ENCODE measurements at regions of chr1 and their contacts with region 1.

Region 1: DNA sequence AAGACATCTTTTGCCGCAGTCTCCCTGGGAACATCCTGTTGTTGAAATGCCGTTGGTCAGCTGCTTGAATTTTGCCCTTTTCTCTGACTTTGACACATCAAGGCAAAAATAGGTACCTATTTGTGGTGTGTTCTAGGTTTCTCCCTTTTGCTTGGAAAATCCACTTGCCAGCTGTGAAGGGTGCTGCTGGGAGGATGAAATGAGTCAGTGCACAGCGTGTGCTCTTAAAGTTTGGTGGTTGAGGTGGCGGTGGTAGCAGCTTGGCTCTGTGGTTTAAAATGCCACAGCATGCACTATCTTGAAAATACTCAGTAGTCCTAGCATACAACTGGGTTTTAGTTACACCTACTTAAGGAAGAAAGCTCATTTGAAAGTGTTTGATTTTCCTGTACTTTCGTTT is 183.8 kb downstream of the DHRS3 start:
- DNase-seq: peak; percentile 90
- H3K4me3 Mint-ChIP-seq: peak overlapping the region; percentile 23
- H3K27ac Mint-ChIP-seq: peak overlapping the region; percentile 85
- H3K4me1 Mint-ChIP-seq: peaks cover 64% of the 10 kb centered on the region
- H3K27me3 Mint-ChIP-seq: no peaks in the 10 kb centered on the region

Region 2: DNA sequence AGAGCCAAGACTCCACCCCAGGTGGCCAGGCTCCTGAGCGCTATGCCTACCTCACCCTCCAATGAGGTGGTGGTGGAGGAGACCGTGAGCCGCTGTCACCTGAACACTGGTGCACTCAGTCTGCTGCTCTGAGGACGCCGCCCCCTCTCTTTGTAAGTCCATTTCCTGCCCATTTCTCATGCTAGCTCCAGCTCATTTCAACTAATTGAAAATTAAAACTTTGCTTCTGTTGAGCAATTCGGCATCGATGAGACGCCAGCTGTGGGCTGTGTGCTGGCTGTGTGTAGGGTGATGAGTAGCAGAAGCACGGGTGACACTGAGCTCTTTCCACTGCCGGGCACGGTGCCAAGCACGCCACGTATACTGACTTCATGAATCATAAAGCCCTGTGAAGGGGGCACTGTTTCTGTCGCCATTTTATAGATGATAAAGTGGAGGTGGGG is 256.2 kb before region 1 on chr1:
- intact Hi-C with region 1: loop called (anchors 10 kb)
- DNase-seq: peak; percentile 89
- H3K4me3 Mint-ChIP-seq: peak overlapping the region; percentile 80
- H3K27ac Mint-ChIP-seq: peak overlapping the region; percentile 88
- H3K4me1 Mint-ChIP-seq: peaks cover 80% of the 10 kb centered on the region
- H3K27me3 Mint-ChIP-seq: no peaks in the 10 kb centered on the region

Region 3: GRCh38 chr1:12296623-12297022 is 137.6 kb before region 1 on chr1:
- intact Hi-C with region 1: loop called (anchors 1 kb)
- DNase-seq: no peak
- H3K4me3 Mint-ChIP-seq: peak overlapping the region; percentile 33
- H3K27ac Mint-ChIP-seq: peak overlapping the region; percentile 69
- H3K4me1 Mint-ChIP-seq: peaks cover 26% of the 10 kb centered on the region
- H3K27me3 Mint-ChIP-seq: no peaks in the 10 kb centered on the region

Region 4: DNA sequence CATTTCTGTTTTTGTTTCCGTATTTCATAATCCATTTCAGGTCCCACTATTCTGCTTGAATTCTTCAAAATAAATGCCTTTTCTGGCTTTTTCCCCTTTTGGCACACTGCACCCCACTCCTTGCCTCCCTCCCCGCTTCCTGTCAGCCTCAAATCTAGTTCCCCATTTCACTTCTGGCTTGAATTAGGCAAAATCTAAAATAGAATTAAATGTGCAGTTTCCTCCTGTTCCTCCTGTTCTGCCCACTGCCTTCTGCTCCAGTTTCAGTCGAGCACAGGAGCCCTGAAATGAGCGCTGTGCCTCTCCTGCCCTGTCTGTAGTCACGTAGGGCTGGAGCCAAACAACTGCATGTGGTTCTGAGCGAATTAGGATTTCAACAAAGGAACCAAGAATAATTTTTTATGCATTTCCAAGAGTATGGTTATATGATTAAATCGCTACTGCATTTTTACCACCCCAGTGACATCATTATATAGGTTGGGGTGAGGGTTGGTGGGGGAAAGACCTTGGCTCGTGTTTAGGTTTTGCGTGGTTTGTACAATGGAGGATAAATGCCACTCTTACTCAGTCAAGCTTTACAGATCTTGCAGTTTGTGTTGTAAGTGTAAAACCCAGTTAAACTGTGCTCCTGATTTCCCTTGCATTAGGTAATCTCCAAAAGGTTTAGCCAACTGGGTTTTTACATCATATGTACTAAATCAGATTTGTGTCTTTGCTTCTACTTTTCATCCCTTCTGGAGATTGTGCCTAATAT is 89.4 kb before region 1 on chr1:
- intact Hi-C with region 1: loop called (anchors 5 kb)
- DNase-seq: peak; percentile 67
- H3K4me3 Mint-ChIP-seq: peak overlapping the region; percentile 71
- H3K27ac Mint-ChIP-seq: peak overlapping the region; percentile 85
- H3K4me1 Mint-ChIP-seq: peaks cover 42% of the 10 kb centered on the region
- H3K27me3 Mint-ChIP-seq: no peaks in the 10 kb centered on the region

Region 5: GRCh38 chr1:12467570-12468286 is 33.6 kb after region 1 on chr1:
- intact Hi-C with region 1: loop called (anchors 1 kb)
- DNase-seq: no peak
- H3K4me3 Mint-ChIP-seq: peak overlapping the region; percentile 7
- H3K27ac Mint-ChIP-seq: peak overlapping the region; percentile 82
- H3K4me1 Mint-ChIP-seq: peaks cover 34% of the 10 kb centered on the region
- H3K27me3 Mint-ChIP-seq: no peaks in the 10 kb centered on the region

Region 6: GRCh38 chr1:12472798-12473551 is 38.8 kb after region 1 on chr1:
- intact Hi-C with region 1: loop called (anchors 1 kb)
- DNase-seq: peak; percentile 87
- H3K4me3 Mint-ChIP-seq: peak overlapping the region; percentile 77
- H3K27ac Mint-ChIP-seq: peak overlapping the region; percentile 94
- H3K4me1 Mint-ChIP-seq: peaks cover 71% of the 10 kb centered on the region
- H3K27me3 Mint-ChIP-seq: no peaks in the 10 kb centered on the region

Region 7: DNA sequence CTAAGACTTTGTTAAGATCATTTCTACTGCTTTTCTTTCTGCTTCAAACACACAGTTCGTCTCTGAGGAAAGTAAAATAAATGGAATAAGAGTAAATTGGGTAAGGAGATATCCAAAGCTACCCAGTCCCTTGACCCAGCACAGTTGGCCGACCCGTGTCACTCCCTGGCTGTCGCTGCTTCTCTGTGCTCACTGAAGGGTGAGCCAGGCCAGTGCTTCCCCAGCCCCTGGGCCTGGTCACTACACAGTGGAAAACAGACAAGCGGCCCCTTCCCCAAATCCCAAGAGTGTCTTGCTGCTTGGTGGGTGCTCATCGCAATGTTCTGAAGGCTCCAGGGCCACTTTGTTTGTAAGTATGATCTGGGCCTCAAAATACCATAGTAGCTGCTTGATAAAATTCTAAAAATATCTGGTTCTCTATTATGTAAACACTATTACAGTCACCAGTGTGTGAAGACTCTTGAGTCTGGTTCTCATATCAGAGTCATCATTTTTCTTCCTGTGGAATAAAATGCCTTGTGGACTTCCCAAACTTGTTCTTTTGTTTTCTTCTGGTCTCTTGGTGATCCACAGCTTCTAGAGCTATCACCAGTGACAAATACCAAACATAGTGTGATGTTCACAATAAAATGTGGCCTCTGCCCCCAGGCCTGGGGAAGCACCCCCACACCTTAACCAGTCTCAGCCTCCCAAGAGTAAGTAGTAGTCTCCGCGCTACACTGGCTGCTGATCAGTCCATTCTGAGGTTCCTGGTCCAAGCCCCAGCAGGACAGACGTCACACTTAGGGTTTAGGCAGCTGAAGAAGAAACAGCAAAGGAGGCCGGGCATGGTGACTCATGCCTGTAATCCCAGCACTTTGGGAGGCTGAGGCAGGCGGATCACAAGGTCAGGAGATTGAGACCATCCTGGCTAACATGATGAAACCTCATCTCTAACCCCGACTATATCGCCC is 77.6 kb after region 1 on chr1:
- intact Hi-C with region 1: loop called (anchors 1 kb)
- DNase-seq: peak; percentile 58
- H3K4me3 Mint-ChIP-seq: peak overlapping the region; percentile 82
- H3K27ac Mint-ChIP-seq: peak overlapping the region; percentile 99
- H3K4me1 Mint-ChIP-seq: peaks cover 44% of the 10 kb centered on the region
- H3K27me3 Mint-ChIP-seq: no peaks in the 10 kb centered on the region

Region 8: GRCh38 chr1:12610305-12610935 is 176.2 kb after region 1 on chr1:
- intact Hi-C with region 1: no loop called
- DNase-seq: no peak
- H3K4me3 Mint-ChIP-seq: no peak overlapping the region
- H3K27ac Mint-ChIP-seq: no peak overlapping the region
- H3K4me1 Mint-ChIP-seq: peaks cover 46% of the 10 kb centered on the region
- H3K27me3 Mint-ChIP-seq: peaks cover 2% of the 10 kb centered on the region

Region 9: GRCh38 chr1:12734651-12735050 is 300.5 kb after region 1 on chr1:
- intact Hi-C with region 1: no loop called
- DNase-seq: no peak
- H3K4me3 Mint-ChIP-seq: no peak overlapping the region
- H3K27ac Mint-ChIP-seq: no peak overlapping the region
- H3K4me1 Mint-ChIP-seq: no peaks in the 10 kb centered on the region
- H3K27me3 Mint-ChIP-seq: peaks cover 44% of the 10 kb centered on the region

Measured in activated CD4-positive, alpha-beta T cell treated with anti-CD3 and anti-CD28 coated beads, Interleukin-2, amount 10 ng/mL, durations not matched to agents 24 days and 14 days (primary cell).